MCF 10A (cell line): ENCODE measurements at regions of chr5 and their contacts with region 1.

Region 1: DNA sequence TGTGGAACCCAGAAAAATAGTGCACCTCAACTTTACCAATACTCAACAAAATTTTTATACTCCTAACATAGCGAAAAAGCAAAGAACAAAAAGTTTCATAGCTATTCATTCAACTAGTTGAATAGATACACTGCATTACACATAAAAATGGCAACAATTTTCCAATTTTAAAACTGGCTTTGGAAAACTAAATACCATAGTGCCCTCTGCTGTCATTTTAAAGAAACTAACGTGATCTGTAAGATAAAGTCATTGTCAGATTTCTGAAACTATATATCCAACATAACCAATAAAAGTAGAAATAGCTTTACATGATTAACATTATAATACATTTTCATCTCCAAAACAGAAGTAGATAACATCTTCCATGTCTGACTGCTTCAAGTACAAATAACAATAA is 31.6 kb downstream of the DTWD2 start:
- DNase-seq: peak; percentile 14
- H3K4me3 Mint-ChIP-seq: no peak overlapping the region
- H3K27ac Mint-ChIP-seq: no peak overlapping the region
- H3K4me1 Mint-ChIP-seq: no peaks in the 10 kb centered on the region
- H3K27me3 Mint-ChIP-seq: no peaks in the 10 kb centered on the region
- CTCF ChIP-seq: peak; percentile 35

Region 2: DNA sequence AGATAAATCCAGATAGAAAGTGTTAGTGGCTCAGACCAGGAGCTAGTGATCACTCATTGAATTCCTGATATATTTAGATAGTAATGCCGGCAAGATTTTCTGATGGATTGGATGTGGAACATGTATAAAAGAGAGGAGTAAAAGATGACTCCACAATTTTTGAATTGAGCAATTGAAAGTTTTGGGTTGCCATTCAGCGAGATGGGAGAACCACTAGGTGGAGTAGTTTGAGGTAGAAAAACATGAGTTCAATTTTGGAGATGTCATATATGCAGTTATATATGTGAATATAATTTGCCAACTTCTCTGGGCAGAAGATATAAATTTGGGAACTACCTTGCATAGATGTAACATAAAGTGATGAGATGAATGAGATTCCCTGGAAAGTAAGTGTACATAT is 1879.6 kb before region 1 on chr5:
- CTCF ChIA-PET with region 1: no interaction called
- POLR2A ChIA-PET with region 1: no interaction called
- intact Hi-C with region 1: loop called (anchors 5 kb)
- DNase-seq: peak; percentile 51
- H3K4me3 Mint-ChIP-seq: no peak overlapping the region
- H3K27ac Mint-ChIP-seq: no peak overlapping the region
- H3K4me1 Mint-ChIP-seq: no peaks in the 10 kb centered on the region
- H3K27me3 Mint-ChIP-seq: no peaks in the 10 kb centered on the region
- CTCF ChIP-seq: peak; percentile 53

Region 3: DNA sequence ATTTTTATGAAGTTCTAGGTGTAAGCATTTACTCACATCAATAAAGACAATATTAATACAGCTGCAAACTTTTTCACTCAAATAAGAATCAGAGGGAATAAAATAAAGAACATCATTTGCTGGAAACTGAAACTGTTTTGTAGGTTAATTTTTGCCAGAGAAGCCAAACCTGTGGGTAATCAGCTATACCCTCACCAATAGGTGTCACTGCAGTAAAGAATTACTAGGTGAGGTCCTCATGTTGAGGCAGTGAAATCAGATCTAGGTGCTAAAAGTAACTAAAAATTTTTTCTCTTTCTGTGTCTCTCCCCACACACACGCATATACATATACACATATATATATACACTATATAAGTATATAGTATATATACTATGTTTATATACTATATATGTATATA is 1365.8 kb before region 1 on chr5:
- CTCF ChIA-PET with region 1: no interaction called
- POLR2A ChIA-PET with region 1: no interaction called
- intact Hi-C with region 1: loop called (anchors 5 kb)
- DNase-seq: peak; percentile 67
- H3K4me3 Mint-ChIP-seq: no peak overlapping the region
- H3K27ac Mint-ChIP-seq: no peak overlapping the region
- H3K4me1 Mint-ChIP-seq: peaks cover 20% of the 10 kb centered on the region
- H3K27me3 Mint-ChIP-seq: no peaks in the 10 kb centered on the region
- CTCF ChIP-seq: peak; percentile 59

Region 4: GRCh38 chr5:118791926-118792734 is 164.6 kb before region 1 on chr5:
- CTCF ChIA-PET with region 1: interaction called, 19 read pairs
- POLR2A ChIA-PET with region 1: no interaction called
- intact Hi-C with region 1: no loop called
- DNase-seq: peak; percentile 70
- H3K4me3 Mint-ChIP-seq: no peak overlapping the region
- H3K27ac Mint-ChIP-seq: no peak overlapping the region
- H3K4me1 Mint-ChIP-seq: no peaks in the 10 kb centered on the region
- H3K27me3 Mint-ChIP-seq: no peaks in the 10 kb centered on the region
- CTCF ChIP-seq: peak; percentile 60

Region 5: GRCh38 chr5:119078071-119078846 is 121.5 kb after region 1 on chr5:
- CTCF ChIA-PET with region 1: no interaction called
- POLR2A ChIA-PET with region 1: no interaction called
- intact Hi-C with region 1: no loop called
- DNase-seq: no peak
- H3K4me3 Mint-ChIP-seq: no peak overlapping the region
- H3K27ac Mint-ChIP-seq: no peak overlapping the region
- H3K4me1 Mint-ChIP-seq: peaks cover 34% of the 10 kb centered on the region
- H3K27me3 Mint-ChIP-seq: no peaks in the 10 kb centered on the region
- CTCF ChIP-seq: no peak